ENCODE measurements at regions of chr13 and their contacts with region 1.

Region 1: GRCh38 chr13:99656092-99656745 is 154.9 kb downstream of the TM9SF2 start:
- DNase-seq: peak; percentile 67 to 94
- ATAC-seq: peak; percentile 83 to 89 (median 88)
- H3K4me3 ChIP-seq: no peak overlapping the region
- H3K4me3 Mint-ChIP-seq: peak overlapping the region; percentile 83
- H3K27ac ChIP-seq: no peak overlapping the region
- H3K27ac Mint-ChIP-seq: peak overlapping the region in 1 of 2 donors; percentile 7
- H3K4me1 ChIP-seq: peaks cover 26% of the 10 kb centered on the region
- H3K4me1 Mint-ChIP-seq: peaks cover 32 to 33% of the 10 kb centered on the region in 2 donors
- H3K27me3 ChIP-seq: peaks cover 3% of the 10 kb centered on the region
- H3K27me3 Mint-ChIP-seq: peaks cover 9 to 22% of the 10 kb centered on the region in 2 donors
- CTCF ChIP-seq: peak; percentile 90

Region 2: GRCh38 chr13:99687723-99688397 is 31.6 kb after region 1 on chr13:
- intact Hi-C with region 1: no loop called
- DNase-seq: no peak
- ATAC-seq: no peak
- H3K4me3 ChIP-seq: no peak overlapping the region
- H3K4me3 Mint-ChIP-seq: no peak overlapping the region
- H3K27ac ChIP-seq: no peak overlapping the region
- H3K27ac Mint-ChIP-seq: no peak overlapping the region
- H3K4me1 ChIP-seq: no peaks in the 10 kb centered on the region
- H3K4me1 Mint-ChIP-seq: no peaks in the 10 kb centered on the region
- H3K27me3 ChIP-seq: no peaks in the 10 kb centered on the region
- H3K27me3 Mint-ChIP-seq: no peaks in the 10 kb centered on the region
- CTCF ChIP-seq: no peak

Region 3: DNA sequence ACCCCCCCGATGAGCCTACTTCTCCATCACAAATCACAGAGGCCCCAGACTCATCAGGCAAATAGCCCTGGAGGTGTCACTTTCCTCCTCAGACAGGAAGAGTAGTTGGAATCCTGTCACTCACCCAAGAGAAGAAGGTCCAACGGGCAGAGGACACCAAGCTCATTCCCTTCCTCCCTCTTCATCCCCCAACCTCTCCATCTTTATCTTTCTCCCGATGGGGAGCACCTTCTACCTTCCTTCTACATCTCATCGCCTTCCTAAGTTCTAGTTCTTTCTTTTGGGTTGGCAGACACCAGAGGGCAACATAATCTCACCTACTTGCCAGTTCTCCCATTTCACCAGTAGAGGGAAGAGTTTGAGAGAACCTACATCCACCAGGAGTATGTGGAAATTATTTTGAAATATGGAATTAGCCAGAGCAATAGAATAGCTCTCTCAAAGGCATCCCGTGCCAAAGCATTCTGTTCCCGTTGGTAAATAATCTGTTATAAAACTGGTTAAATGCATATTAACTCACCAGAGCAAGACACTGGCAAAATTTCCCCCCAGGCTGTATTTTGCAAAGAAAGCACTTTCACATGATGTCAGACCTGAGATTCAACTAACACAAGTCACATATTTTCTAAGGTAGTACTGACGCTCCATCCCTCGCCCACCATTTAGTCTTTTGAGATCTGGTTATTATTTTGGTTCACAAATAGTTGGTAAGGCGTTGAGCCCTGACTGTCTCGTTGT is 260.3 kb after region 1 on chr13:
- intact Hi-C with region 1: loop called (anchors 1 kb)
- DNase-seq: peak in 1 of 2 donors; percentile 76
- ATAC-seq: peak; percentile 62 to 87 (median 64)
- H3K4me3 ChIP-seq: no peak overlapping the region
- H3K4me3 Mint-ChIP-seq: no peak overlapping the region
- H3K27ac ChIP-seq: no peak overlapping the region
- H3K27ac Mint-ChIP-seq: no peak overlapping the region
- H3K4me1 ChIP-seq: peaks cover 6% of the 10 kb centered on the region
- H3K4me1 Mint-ChIP-seq: peaks cover 0 to 6% of the 10 kb centered on the region in 2 donors
- H3K27me3 ChIP-seq: no peaks in the 10 kb centered on the region
- H3K27me3 Mint-ChIP-seq: peaks cover 28 to 39% of the 10 kb centered on the region in 2 donors
- CTCF ChIP-seq: peak; percentile 72

Region 4: GRCh38 chr13:100235311-100235901 is 579.2 kb after region 1 on chr13:
- intact Hi-C with region 1: loop called (anchors 1 kb)
- DNase-seq: peak in 1 of 2 donors; percentile 70
- ATAC-seq: no peak
- H3K4me3 ChIP-seq: no peak overlapping the region
- H3K4me3 Mint-ChIP-seq: peak overlapping the region; percentile 8
- H3K27ac ChIP-seq: no peak overlapping the region
- H3K27ac Mint-ChIP-seq: no peak overlapping the region
- H3K4me1 ChIP-seq: no peaks in the 10 kb centered on the region
- H3K4me1 Mint-ChIP-seq: peaks cover 7 to 8% of the 10 kb centered on the region in 2 donors
- H3K27me3 ChIP-seq: no peaks in the 10 kb centered on the region
- H3K27me3 Mint-ChIP-seq: no peaks in the 10 kb centered on the region
- CTCF ChIP-seq: peak; percentile 46

Region 5: DNA sequence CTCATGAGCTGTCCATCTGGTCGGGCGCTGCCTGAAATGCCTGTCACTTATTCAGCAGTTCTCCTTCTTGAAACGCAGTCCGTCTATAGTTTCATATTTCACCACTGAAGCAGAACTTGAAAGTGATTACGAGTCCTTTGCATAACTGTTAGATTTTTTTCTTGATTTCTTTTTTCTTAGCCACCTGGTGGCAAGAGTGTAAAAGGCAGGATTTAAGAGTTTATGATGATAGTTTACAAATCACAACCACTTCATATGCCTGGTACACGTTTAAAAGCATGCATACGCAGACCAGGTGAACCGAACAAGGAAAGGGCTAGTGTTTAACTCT is 886.6 kb after region 1 on chr13:
- intact Hi-C with region 1: loop called (anchors 2 kb)
- DNase-seq: peak in 1 of 2 donors; percentile 58
- ATAC-seq: peak in 2 of 3 donors; percentile 35 to 37
- H3K4me3 ChIP-seq: no peak overlapping the region
- H3K4me3 Mint-ChIP-seq: no peak overlapping the region
- H3K27ac ChIP-seq: no peak overlapping the region
- H3K27ac Mint-ChIP-seq: no peak overlapping the region
- H3K4me1 ChIP-seq: peaks cover 4% of the 10 kb centered on the region
- H3K4me1 Mint-ChIP-seq: peaks cover 5 to 11% of the 10 kb centered on the region in 2 donors
- H3K27me3 ChIP-seq: no peaks in the 10 kb centered on the region
- H3K27me3 Mint-ChIP-seq: no peaks in the 10 kb centered on the region
- CTCF ChIP-seq: peak; percentile 43

Measured in natural killer cell (primary cell).